Activated CD4-positive, alpha-beta T cell treated with anti-CD3 and anti-CD28 coated beads for 36 hours (primary cell): ENCODE measurements at regions of chr18 and their contacts with region 1.

Region 1: GRCh38 chr18:47930931-47931717 is 665 bp upstream of the SMAD2 start:
- DNase-seq: peak; percentile 97
- ATAC-seq: peak; percentile 79
- H3K4me3 Mint-ChIP-seq: peak overlapping the region; percentile 77
- H3K27ac Mint-ChIP-seq: peak overlapping the region; percentile 91
- H3K4me1 Mint-ChIP-seq: peaks cover 36% of the 10 kb centered on the region
- H3K27me3 Mint-ChIP-seq: no peaks in the 10 kb centered on the region

Region 2: GRCh38 chr18:46104128-46104911 is 1826.8 kb before region 1 on chr18 and contains the start of gene HAUS1:
- CTCF ChIA-PET with region 1: no interaction called
- POLR2A ChIA-PET with region 1: no interaction called
- intact Hi-C with region 1: loop called in 1 of 2 experiments (anchors 10 kb)
- DNase-seq: peak; percentile 90
- ATAC-seq: peak; percentile 96
- H3K4me3 Mint-ChIP-seq: peak within 1 kb of the TSS; percentile 95
- H3K27ac Mint-ChIP-seq: peak within 1 kb of the TSS; percentile 95
- H3K4me1 Mint-ChIP-seq: peaks cover 32% of the 10 kb centered on the region
- H3K27me3 Mint-ChIP-seq: no peaks in the 10 kb centered on the region
- total RNA-seq, gene HAUS1: 62.2 to 79.9 TPM

Region 3: DNA sequence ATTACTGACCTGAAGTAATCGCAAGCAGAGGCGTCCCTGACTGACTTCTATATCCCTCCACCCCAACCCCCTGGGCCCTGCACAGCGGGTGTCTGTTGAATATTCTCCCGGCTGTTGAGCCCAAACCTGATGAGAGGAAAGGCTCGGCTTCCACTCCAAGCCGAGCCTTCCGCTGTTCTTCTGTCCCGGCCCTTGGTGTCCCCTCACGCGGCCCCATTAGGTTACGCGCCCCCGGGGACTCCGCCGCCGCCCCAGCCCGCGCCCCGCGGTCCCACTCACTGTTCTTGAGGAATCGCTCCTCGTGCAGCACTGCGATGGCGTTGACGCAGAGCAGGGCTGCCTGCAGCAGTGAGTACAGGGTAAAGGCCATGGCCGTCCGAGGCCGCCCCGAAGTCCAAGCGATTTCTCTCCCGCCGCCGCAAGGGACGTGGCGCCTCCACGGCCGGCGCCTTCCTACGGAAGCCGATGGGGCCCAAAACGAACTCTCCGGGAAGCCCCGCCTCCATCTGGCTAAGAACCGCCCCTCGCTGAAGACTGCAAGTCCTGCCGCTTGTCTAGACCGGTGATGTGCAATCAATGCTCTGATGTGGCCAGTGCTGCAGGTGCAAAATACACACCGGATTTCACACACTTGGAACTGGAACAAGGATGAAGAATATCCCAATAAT is 755.1 kb before region 1 on chr18 and contains the start of gene IER3IP1:
- CTCF ChIA-PET with region 1: no interaction called
- POLR2A ChIA-PET with region 1: no interaction called
- intact Hi-C with region 1: loop called in 1 of 2 experiments (anchors 2 kb)
- DNase-seq: peak; percentile 93
- ATAC-seq: peak; percentile 92
- H3K4me3 Mint-ChIP-seq: no peak within 1 kb of the TSS
- H3K27ac Mint-ChIP-seq: peak within 1 kb of the TSS; percentile 40
- H3K4me1 Mint-ChIP-seq: peaks cover 2% of the 10 kb centered on the region
- H3K27me3 Mint-ChIP-seq: no peaks in the 10 kb centered on the region
- total RNA-seq, gene IER3IP1: 9.0 to 11.5 TPM

Region 4: DNA sequence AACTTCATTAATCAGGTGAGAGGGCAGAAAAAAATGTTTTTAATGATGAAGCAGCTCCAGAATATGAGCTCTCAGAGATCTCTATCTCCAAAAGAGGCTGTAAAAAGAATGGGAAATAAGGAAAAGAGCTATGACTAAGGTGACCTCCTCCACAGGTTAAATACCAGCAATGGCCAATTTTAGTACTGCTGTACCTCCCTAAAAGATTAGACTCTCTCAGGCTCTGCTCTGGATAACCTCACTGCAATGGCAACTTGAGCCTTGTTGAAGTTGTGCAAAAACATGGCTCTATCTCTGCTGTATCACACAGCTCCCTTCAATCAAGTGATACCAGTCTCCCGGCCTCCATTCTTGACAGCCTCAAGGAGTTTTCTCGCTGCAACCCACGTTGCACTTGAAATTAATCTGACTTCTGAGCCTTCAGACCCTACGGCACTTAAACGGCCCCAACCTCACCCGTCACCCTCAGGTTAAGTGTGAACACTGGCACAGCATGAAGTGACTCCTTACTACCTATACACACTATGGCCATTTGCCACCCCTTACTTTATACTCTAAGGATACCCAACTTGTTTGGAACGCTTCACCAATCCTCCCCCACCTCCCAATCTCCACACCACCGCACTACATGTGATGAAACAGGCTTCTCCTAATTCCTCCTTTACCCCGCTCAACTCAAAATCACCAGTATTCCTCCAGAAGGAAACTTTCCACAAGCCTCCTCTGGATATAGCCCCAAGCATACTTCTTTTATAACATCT is 37.0 kb before region 1 on chr18:
- CTCF ChIA-PET with region 1: interaction called, 5 read pairs
- POLR2A ChIA-PET with region 1: interaction called, 3 read pairs
- intact Hi-C with region 1: loop called in 1 of 2 experiments (anchors 5 kb)
- DNase-seq: no peak
- ATAC-seq: no peak
- H3K4me3 Mint-ChIP-seq: no peak overlapping the region
- H3K27ac Mint-ChIP-seq: peak overlapping the region; percentile 11
- H3K4me1 Mint-ChIP-seq: peaks cover 72% of the 10 kb centered on the region
- H3K27me3 Mint-ChIP-seq: no peaks in the 10 kb centered on the region

Region 5: DNA sequence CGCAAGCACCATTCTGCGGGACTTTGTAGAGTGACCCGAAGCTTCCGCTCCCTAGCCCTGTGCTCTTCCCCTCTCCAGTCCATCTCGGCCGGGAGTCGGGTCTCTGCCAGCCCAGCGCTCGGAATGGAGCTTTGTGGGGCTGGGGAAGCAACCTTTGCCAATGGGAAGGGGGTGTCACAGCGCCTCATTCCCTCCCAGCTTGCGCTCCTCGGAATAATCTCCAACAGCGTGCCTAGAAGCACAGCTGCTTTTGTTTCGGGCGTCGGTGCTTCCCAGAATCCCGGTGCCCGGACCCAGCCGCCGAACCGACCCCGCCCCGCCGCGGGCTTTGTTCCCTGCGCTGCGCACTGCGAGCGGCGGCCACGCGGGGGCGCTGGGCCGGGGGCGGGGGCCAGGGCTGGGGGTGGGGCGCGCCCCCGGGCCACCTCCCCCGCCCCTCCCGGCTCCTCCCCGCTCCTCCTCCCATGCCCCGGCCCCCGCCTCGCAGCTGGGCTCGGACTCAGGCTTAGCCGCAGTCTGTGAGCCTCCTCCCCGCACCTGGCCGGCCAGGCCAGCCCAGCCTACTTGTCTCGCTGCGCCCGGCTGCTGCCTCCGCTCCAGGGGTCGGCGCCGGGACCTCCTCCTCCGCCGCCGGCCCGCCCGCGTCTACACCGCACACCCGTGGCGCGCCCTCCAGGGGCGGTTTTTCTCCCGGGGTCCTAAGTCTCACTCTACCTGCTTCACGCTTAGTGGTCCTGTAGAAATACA is 77.0 kb after region 1 on chr18:
- CTCF ChIA-PET with region 1: no interaction called
- POLR2A ChIA-PET with region 1: no interaction called
- intact Hi-C with region 1: loop called in 1 of 2 experiments (anchors 5 kb)
- DNase-seq: peak; percentile 66
- ATAC-seq: peak; percentile 85
- H3K4me3 Mint-ChIP-seq: peak overlapping the region; percentile 55
- H3K27ac Mint-ChIP-seq: no peak overlapping the region
- H3K4me1 Mint-ChIP-seq: peaks cover 2% of the 10 kb centered on the region
- H3K27me3 Mint-ChIP-seq: peaks cover 25% of the 10 kb centered on the region

Region 6: GRCh38 chr18:48538531-48539405 is 607.6 kb after region 1 on chr18 and contains the start of gene CTIF:
- CTCF ChIA-PET with region 1: no interaction called
- POLR2A ChIA-PET with region 1: no interaction called
- intact Hi-C with region 1: loop called in 1 of 2 experiments (anchors 2 kb)
- DNase-seq: peak; percentile 86
- ATAC-seq: peak; percentile 86
- H3K4me3 Mint-ChIP-seq: peak within 1 kb of the TSS; percentile 78
- H3K27ac Mint-ChIP-seq: no peak within 1 kb of the TSS
- H3K4me1 Mint-ChIP-seq: peaks cover 15% of the 10 kb centered on the region
- H3K27me3 Mint-ChIP-seq: peaks cover 8% of the 10 kb centered on the region
- total RNA-seq, gene CTIF: 4.5 to 5.3 TPM

Region 7: GRCh38 chr18:49813319-49814146 is 1882.4 kb after region 1 on chr18 and contains the start of gene ACAA2:
- CTCF ChIA-PET with region 1: no interaction called
- POLR2A ChIA-PET with region 1: no interaction called
- intact Hi-C with region 1: loop called in 1 of 2 experiments (anchors 5 kb)
- DNase-seq: peak; percentile 92
- ATAC-seq: peak; percentile 93
- H3K4me3 Mint-ChIP-seq: peak within 1 kb of the TSS; percentile 93
- H3K27ac Mint-ChIP-seq: peak within 1 kb of the TSS; percentile 98
- H3K4me1 Mint-ChIP-seq: peaks cover 47% of the 10 kb centered on the region
- H3K27me3 Mint-ChIP-seq: no peaks in the 10 kb centered on the region
- total RNA-seq, gene ACAA2: 63.4 to 75.2 TPM